CD4-positive, alpha-beta memory T cell (primary cell): ENCODE measurements at regions of chr10 and their contacts with region 1.

Region 1: GRCh38 chr10:43348511-43349312 is 22.7 kb upstream of the FXYD4 start:
- DNase-seq: peak; percentile 85 to 87 (median 86)
- H3K4me3 ChIP-seq: no peak overlapping the region
- H3K4me3 Mint-ChIP-seq: peak overlapping the region in 3 of 8 donors; percentile 27 to 50 (median 31)
- H3K27ac ChIP-seq: no peak overlapping the region
- H3K27ac Mint-ChIP-seq: peak overlapping the region in 6 of 7 donors; percentile 36 to 83 (median 57)
- H3K4me1 ChIP-seq: peaks cover 20% of the 10 kb centered on the region
- H3K4me1 Mint-ChIP-seq: peaks cover 16 to 30% (median 23%) of the 10 kb centered on the region in 4 donors
- H3K27me3 ChIP-seq: no peaks in the 10 kb centered on the region
- H3K27me3 Mint-ChIP-seq: peaks cover 6 to 7% of the 10 kb centered on the region in 2 donors

Region 2: GRCh38 chr10:43204943-43205671 is 143.6 kb before region 1 on chr10:
- CTCF ChIA-PET with region 1: interaction called, 20 read pairs
- POLR2A ChIA-PET with region 1: interaction called, 3 read pairs
- intact Hi-C with region 1: loop called (anchors 1 kb)
- DNase-seq: peak in 4 of 5 donors; percentile 29 to 52 (median 47)
- H3K4me3 ChIP-seq: no peak overlapping the region
- H3K4me3 Mint-ChIP-seq: no peak overlapping the region
- H3K27ac ChIP-seq: no peak overlapping the region
- H3K27ac Mint-ChIP-seq: peak overlapping the region in 2 of 7 donors; percentile 53 to 66
- H3K4me1 ChIP-seq: peaks cover 8% of the 10 kb centered on the region
- H3K4me1 Mint-ChIP-seq: peaks cover 0 to 10% (median 2%) of the 10 kb centered on the region in 4 donors
- H3K27me3 ChIP-seq: no peaks in the 10 kb centered on the region
- H3K27me3 Mint-ChIP-seq: no peaks in the 10 kb centered on the region

Region 3: GRCh38 chr10:43265799-43266721 is 82.7 kb before region 1 on chr10:
- CTCF ChIA-PET with region 1: interaction called, 40 read pairs
- POLR2A ChIA-PET with region 1: interaction called, 14 read pairs
- intact Hi-C with region 1: loop called (anchors 1 kb)
- DNase-seq: peak; percentile 60 to 62 (median 61)
- H3K4me3 ChIP-seq: peak overlapping the region in 1 of 2 donors; percentile 54
- H3K4me3 Mint-ChIP-seq: peak overlapping the region; percentile 85 to 93 (median 89)
- H3K27ac ChIP-seq: peak overlapping the region; percentile 15
- H3K27ac Mint-ChIP-seq: peak overlapping the region; percentile 53 to 91 (median 72)
- H3K4me1 ChIP-seq: peaks cover 10% of the 10 kb centered on the region
- H3K4me1 Mint-ChIP-seq: peaks cover 6 to 24% (median 15%) of the 10 kb centered on the region in 4 donors
- H3K27me3 ChIP-seq: peaks cover 17% of the 10 kb centered on the region
- H3K27me3 Mint-ChIP-seq: peaks cover 5 to 9% of the 10 kb centered on the region in 2 donors

Region 4: DNA sequence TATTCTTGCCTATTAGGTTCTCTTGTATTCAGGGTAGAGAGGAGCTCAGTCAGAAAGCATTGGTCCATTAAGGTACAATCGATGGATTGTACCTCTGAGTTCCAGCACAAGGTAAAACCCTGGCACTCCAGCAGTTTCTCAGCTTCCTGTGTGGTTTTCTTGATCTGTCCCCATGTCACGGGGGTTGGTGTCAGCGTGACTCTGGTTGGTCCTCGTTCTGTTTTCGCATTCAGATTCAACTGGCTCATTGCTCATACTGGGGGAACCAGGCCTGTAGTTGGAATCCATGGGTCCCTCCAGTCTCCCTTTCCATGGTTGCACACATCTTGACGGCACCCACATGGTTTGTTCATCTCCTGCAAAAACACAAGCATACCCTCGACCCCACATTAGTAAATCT is 49.1 kb before region 1 on chr10:
- CTCF ChIA-PET with region 1: interaction called, 153 read pairs
- POLR2A ChIA-PET with region 1: interaction called, 4 read pairs
- intact Hi-C with region 1: no loop called
- DNase-seq: peak; percentile 59 to 75 (median 64)
- H3K4me3 ChIP-seq: peak overlapping the region in 1 of 2 donors; percentile 9
- H3K4me3 Mint-ChIP-seq: peak overlapping the region in 7 of 8 donors; percentile 4 to 81 (median 68)
- H3K27ac ChIP-seq: peak overlapping the region; percentile 48
- H3K27ac Mint-ChIP-seq: peak overlapping the region; percentile 86 to 96 (median 94)
- H3K4me1 ChIP-seq: peaks cover 66% of the 10 kb centered on the region
- H3K4me1 Mint-ChIP-seq: peaks cover 57 to 98% (median 77%) of the 10 kb centered on the region in 4 donors
- H3K27me3 ChIP-seq: no peaks in the 10 kb centered on the region
- H3K27me3 Mint-ChIP-seq: no peaks in the 10 kb centered on the region

Region 5: DNA sequence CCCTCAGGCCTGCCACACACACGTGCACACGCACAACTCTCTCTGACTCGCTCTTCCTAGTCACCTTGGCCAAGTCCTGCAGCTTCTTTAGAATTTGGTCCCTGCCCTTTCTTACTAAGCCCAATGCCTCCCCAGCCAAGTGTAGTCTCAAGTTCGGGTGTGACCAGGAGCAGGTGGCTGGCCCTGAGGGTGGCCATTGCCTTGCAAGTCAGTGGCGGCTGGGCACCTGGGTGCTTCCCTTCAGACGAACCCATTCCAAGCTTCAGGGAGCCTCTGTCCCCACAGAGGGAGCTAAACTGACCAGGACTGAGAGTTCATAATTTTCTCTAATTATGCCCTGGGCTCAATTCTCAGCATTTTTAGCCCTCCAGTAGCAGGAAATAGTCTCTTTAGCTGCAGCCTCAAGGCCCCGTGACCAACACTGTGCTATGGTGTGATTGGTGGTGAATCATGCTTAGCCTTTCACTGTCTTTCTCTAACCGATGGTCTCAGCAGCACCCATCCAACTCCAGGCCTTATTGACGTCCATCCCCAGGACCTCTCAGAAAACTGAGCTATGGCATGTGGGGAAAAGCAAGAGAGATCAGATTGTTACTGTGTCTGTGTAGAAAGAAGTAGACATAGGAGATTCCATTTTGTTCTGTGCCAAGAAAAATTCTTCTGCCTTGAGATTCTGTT is 11.9 kb before region 1 on chr10:
- CTCF ChIA-PET with region 1: interaction called, 6 read pairs
- POLR2A ChIA-PET with region 1: interaction called, 10 read pairs
- intact Hi-C with region 1: loop called (anchors 1 kb)
- DNase-seq: no peak
- H3K4me3 ChIP-seq: no peak overlapping the region
- H3K4me3 Mint-ChIP-seq: no peak overlapping the region
- H3K27ac ChIP-seq: no peak overlapping the region
- H3K27ac Mint-ChIP-seq: peak overlapping the region in 2 of 7 donors; percentile 17 to 72
- H3K4me1 ChIP-seq: peaks cover 25% of the 10 kb centered on the region
- H3K4me1 Mint-ChIP-seq: peaks cover 26 to 56% (median 30%) of the 10 kb centered on the region in 4 donors
- H3K27me3 ChIP-seq: no peaks in the 10 kb centered on the region
- H3K27me3 Mint-ChIP-seq: peaks cover 3% of the 10 kb centered on the region in 2 donors

Region 6: GRCh38 chr10:43371418-43371817 is 22.7 kb after region 1 on chr10 and contains the start of gene FXYD4:
- CTCF ChIA-PET with region 1: no interaction called
- POLR2A ChIA-PET with region 1: no interaction called
- intact Hi-C with region 1: no loop called
- DNase-seq: no peak
- H3K4me3 ChIP-seq: no peak within 1 kb of the TSS
- H3K4me3 Mint-ChIP-seq: no peak within 1 kb of the TSS
- H3K27ac ChIP-seq: no peak within 1 kb of the TSS
- H3K27ac Mint-ChIP-seq: peak within 1 kb of the TSS in 1 of 7 donors; percentile 60
- H3K4me1 ChIP-seq: no peaks in the 10 kb centered on the region
- H3K4me1 Mint-ChIP-seq: peaks cover 0 to 9% (median 5%) of the 10 kb centered on the region in 4 donors
- H3K27me3 ChIP-seq: no peaks in the 10 kb centered on the region
- H3K27me3 Mint-ChIP-seq: no peaks in the 10 kb centered on the region
- total RNA-seq, gene FXYD4: not detected

Region 7: DNA sequence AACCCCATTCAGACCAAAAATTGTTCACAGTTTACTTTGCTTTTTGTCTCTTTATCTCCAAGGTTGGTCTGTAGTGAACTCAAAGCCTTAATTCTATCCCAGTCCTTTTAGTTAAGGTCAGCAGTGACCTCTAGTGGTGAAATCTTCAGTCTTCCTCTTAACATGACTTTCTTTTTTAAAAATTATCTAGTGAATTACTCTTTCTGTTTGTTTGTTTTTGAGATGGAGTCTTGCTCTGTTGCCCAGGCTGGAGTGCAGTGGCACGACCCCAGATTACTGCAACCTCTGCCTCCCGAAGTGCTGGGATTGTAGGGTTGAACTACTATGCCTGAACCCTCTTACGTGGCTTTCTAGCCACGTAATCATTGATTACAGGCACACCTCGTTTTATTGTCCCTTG is 113.2 kb after region 1 on chr10:
- CTCF ChIA-PET with region 1: interaction called, 5 read pairs
- POLR2A ChIA-PET with region 1: no interaction called
- intact Hi-C with region 1: loop called (anchors 1 kb)
- DNase-seq: peak; percentile 58 to 75 (median 70)
- H3K4me3 ChIP-seq: no peak overlapping the region
- H3K4me3 Mint-ChIP-seq: peak overlapping the region in 1 of 8 donors; percentile 54
- H3K27ac ChIP-seq: no peak overlapping the region
- H3K27ac Mint-ChIP-seq: peak overlapping the region in 4 of 7 donors; percentile 20 to 71 (median 42)
- H3K4me1 ChIP-seq: peaks cover 2% of the 10 kb centered on the region
- H3K4me1 Mint-ChIP-seq: peaks cover 14 to 21% (median 16%) of the 10 kb centered on the region in 4 donors
- H3K27me3 ChIP-seq: no peaks in the 10 kb centered on the region
- H3K27me3 Mint-ChIP-seq: no peaks in the 10 kb centered on the region